GM23248 (cell line): ENCODE measurements at regions of chr15 and their contacts with region 1.

Region 1: GRCh38 chr15:101008158-101009139 is 89.3 kb downstream of the LRRK1 start:
- DNase-seq: peak; percentile 84
- H3K4me3 ChIP-seq: peak overlapping the region; percentile 63
- H3K27ac ChIP-seq: no peak overlapping the region
- H3K4me1 ChIP-seq: no peaks in the 10 kb centered on the region; the same call in 1 of the 2 replicates
- H3K27me3 ChIP-seq: no peaks in the 10 kb centered on the region

Region 2: GRCh38 chr15:100349696-100350433 is 658.6 kb before region 1 on chr15:
- in situ Hi-C with region 1: loop called (anchors 25 kb)
- DNase-seq: peak; percentile 93
- H3K4me3 ChIP-seq: peak overlapping the region; percentile 95
- H3K27ac ChIP-seq: peak overlapping the region; percentile 56
- H3K4me1 ChIP-seq: peaks cover 7% of the 10 kb centered on the region; the same call in 1 of the 2 replicates
- H3K27me3 ChIP-seq: no peaks in the 10 kb centered on the region

Region 3: DNA sequence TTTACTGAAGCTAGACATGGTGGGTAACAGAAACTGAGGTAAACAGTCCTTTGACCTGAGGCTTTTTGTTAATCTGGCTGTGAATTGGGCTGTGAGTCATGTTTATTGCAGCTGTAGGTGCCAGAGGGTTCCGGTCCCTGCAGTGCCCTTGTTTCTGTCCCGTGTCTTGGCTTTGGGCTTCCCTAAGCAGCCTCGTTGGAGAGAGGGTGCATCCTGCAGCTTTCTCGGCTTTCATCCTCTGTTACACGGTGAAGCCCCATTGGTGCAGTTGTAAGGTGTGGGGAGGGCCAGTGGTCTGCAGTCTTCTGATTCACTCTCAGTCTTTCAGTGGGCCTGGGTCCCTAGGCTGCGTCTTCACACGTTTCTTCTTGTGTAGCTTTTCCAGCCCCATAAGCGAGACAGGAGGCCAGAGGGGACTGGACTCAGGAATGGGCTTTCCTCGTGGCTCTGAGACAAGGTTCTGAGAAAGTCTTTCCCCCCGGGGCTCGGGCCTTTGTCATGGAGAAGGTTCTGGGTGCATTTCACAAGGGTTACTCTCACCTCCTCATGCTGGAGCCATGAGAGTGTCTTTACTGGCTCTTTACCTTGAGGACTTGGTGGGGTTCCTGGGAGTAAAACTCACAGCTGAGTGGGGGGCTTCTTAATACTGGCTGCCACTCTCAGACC is 372.9 kb before region 1 on chr15:
- in situ Hi-C with region 1: loop called (anchors 10 kb)
- DNase-seq: no peak
- H3K4me3 ChIP-seq: no peak overlapping the region
- H3K27ac ChIP-seq: no peak overlapping the region
- H3K4me1 ChIP-seq: no peaks in the 10 kb centered on the region
- H3K27me3 ChIP-seq: no peaks in the 10 kb centered on the region

Region 4: DNA sequence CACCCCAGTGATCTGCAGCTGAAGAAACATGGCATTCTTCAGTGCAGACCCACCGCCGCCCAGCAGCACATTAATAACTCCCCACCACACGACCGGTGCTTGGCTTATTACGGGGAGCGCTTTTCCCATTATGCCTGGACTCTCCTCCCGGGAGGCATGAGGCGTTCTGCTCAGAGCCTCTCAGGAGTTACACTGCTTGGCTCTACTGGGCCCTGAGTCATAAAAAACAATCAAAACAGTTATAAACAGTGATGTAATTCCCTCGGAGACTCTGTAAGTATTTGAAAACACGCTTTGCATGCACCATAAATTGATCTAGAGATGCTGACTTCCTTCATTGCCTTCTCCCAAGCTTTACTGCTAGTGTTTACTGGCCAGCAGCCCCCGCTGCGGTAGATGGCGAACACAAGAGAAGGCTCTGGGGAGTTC is 363.7 kb after region 1 on chr15:
- in situ Hi-C with region 1: no loop called
- DNase-seq: peak; percentile 73
- H3K4me3 ChIP-seq: no peak overlapping the region
- H3K27ac ChIP-seq: no peak overlapping the region
- H3K4me1 ChIP-seq: no peaks in the 10 kb centered on the region
- H3K27me3 ChIP-seq: peaks cover 14% of the 10 kb centered on the region; the same call in 1 of the 2 replicates